OCI-LY7 (cell line): ENCODE measurements at regions of chr21 and their contacts with region 1.

Region 1: GRCh38 chr21:30297476-30297875 is 8.2 kb upstream of the KRTAP25-1 start:
- DNase-seq: no peak
- H3K4me3 ChIP-seq: no peak overlapping the region
- H3K27ac ChIP-seq: no peak overlapping the region
- H3K4me1 ChIP-seq: no peaks in the 10 kb centered on the region
- CTCF ChIP-seq: no peak

Region 2: GRCh38 chr21:30234643-30235042 is 62.8 kb before region 1 on chr21:
- CTCF ChIA-PET with region 1: no interaction called
- POLR2A ChIA-PET with region 1: no interaction called
- intact Hi-C with region 1: loop called (anchors 10 kb)
- DNase-seq: no peak
- H3K4me3 ChIP-seq: no peak overlapping the region
- H3K27ac ChIP-seq: no peak overlapping the region
- H3K4me1 ChIP-seq: no peaks in the 10 kb centered on the region
- CTCF ChIP-seq: no peak

Region 3: DNA sequence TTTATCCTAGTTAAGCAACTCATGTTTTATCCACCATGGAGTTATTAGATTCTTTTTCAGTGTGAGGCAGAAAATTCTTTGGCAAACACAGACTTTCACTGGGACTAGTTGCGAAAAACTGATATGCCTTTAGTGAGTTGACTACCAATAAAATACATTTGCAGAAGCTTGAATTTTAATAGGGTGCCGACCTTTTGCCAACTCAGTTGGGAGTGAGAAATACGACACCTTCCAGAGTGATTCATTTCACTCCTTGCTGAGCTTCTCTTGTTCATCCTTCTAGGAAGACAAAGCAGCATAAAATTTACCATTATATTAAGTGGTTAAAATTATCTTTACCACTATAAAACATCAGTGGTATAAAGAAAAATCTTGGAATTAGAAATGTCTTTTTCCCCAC is 52.1 kb after region 1 on chr21:
- CTCF ChIA-PET with region 1: no interaction called
- POLR2A ChIA-PET with region 1: no interaction called
- intact Hi-C with region 1: no loop called
- DNase-seq: no peak
- H3K4me3 ChIP-seq: no peak overlapping the region
- H3K27ac ChIP-seq: no peak overlapping the region
- H3K4me1 ChIP-seq: no peaks in the 10 kb centered on the region
- CTCF ChIP-seq: no peak

Region 4: GRCh38 chr21:30366157-30366556 is 68.7 kb after region 1 on chr21:
- CTCF ChIA-PET with region 1: no interaction called
- POLR2A ChIA-PET with region 1: no interaction called
- intact Hi-C with region 1: no loop called
- DNase-seq: no peak
- H3K4me3 ChIP-seq: no peak overlapping the region
- H3K27ac ChIP-seq: no peak overlapping the region
- H3K4me1 ChIP-seq: no peaks in the 10 kb centered on the region
- CTCF ChIP-seq: no peak